Right cardiac atrium (tissue), 5 donors: ENCODE measurements at regions of chr6 and their contacts with region 1.

Region 1: DNA sequence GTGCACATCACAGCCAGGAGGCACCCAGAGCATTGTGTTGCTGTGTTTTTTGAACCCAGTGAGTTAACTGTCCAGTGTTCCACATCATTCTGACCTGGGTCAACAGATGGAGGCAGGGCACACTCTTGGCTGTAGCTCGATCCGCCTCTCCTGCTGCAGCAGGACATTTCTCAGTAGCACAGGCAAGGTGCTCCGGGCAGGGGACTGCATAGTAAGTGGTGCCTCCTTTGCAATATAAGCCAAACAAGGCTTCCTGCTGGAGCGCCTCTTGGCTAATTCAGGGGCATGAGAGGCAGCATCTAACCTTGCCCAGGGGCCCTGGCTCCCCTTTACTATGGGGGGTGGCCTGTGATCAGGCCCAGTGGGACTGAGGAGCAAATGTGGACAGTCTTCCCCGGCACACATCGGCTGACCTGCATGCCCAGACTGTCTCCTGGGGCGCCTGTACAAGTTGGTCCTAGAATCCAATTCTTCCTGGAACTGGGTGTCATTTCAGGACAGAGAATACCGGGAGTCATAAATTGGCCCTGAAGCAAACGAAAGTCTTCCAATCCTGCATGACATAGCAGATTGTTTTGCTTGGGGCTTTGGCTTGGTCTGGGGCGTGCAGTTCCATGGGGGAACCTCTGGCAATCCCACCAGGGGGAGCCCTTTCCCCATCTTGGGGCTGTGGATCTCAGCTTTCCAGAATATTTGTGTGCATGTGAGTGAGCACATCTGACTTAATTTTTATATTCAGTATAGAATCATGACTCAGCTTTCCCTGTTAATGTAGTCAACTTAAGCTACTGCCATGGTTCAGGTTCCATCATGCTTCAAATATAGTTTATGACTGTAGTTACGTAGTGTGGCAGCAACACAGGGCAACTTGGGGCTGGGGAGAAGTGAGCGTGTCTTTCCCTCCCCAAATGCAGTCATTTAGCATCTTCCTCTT is 56.0 kb upstream of the DDR1 start:
- DNase-seq: peak; percentile 86 to 96 (median 94)
- ATAC-seq: peak; percentile 92 to 95
- H3K4me3 ChIP-seq: no peak overlapping the region
- H3K27ac ChIP-seq: peak overlapping the region; percentile 72
- H3K4me1 ChIP-seq: no peaks in the 10 kb centered on the region
- H3K27me3 ChIP-seq: no peaks in the 10 kb centered on the region

Region 2: GRCh38 chr6:30793521-30794194 is 34.6 kb before region 1 on chr6:
- intact Hi-C with region 1: no loop called
- DNase-seq: no peak
- ATAC-seq: peak; percentile 59 to 70
- H3K4me3 ChIP-seq: no peak overlapping the region
- H3K27ac ChIP-seq: peak overlapping the region; percentile 16
- H3K4me1 ChIP-seq: no peaks in the 10 kb centered on the region
- H3K27me3 ChIP-seq: no peaks in the 10 kb centered on the region

Region 3: GRCh38 chr6:30877419-30878371 is 49.4 kb after region 1 on chr6:
- intact Hi-C with region 1: loop called (anchors 2 to 5 kb)
- DNase-seq: peak; percentile 90 to 98 (median 94)
- ATAC-seq: peak; percentile 88 to 92
- H3K4me3 ChIP-seq: peak overlapping the region; percentile 46
- H3K27ac ChIP-seq: peak overlapping the region; percentile 91
- H3K4me1 ChIP-seq: peaks cover 5% of the 10 kb centered on the region
- H3K27me3 ChIP-seq: no peaks in the 10 kb centered on the region

Region 4: DNA sequence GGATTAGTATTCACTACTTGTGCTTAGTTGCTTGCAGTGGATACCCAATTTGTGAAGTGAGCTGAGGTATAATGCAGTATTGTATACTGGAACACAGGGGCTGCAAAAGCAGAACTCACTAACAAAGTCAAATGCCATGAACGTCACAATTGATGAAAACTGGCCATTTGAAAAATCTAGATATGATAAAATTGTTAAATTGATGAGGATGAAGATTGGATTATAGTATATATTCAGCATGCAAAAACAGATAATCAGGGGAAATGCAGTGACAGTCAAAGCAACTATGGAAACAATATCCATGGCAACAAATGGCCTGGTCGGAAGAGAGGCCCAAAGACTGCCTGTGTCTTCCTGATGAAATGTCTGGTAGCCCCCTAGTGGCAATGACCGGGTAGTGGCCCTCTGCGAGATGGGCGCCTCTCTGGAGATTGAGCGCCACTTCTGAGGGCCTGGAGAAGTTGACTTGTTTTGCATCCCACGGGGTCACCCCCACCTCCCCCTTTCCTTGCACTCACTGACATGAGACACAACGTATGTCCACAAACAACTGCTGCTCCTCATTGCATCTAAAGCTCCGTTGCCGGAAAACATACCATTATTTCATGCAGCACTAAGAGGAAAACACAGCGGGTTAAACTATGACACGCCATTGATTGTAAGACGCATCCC is 240.5 kb after region 1 on chr6:
- intact Hi-C with region 1: loop called in 2 of 4 experiments (anchors 5 kb)
- DNase-seq: peak; percentile 74 to 91 (median 86)
- ATAC-seq: peak; percentile 87 to 92
- H3K4me3 ChIP-seq: no peak overlapping the region
- H3K27ac ChIP-seq: no peak overlapping the region
- H3K4me1 ChIP-seq: no peaks in the 10 kb centered on the region
- H3K27me3 ChIP-seq: no peaks in the 10 kb centered on the region

Region 5: GRCh38 chr6:31079656-31080261 is 251.5 kb after region 1 on chr6:
- intact Hi-C with region 1: loop called in 3 of 4 experiments (anchors 5 to 10 kb)
- DNase-seq: peak in 2 of 3 donors; percentile 35 to 82
- ATAC-seq: peak; percentile 73
- H3K4me3 ChIP-seq: no peak overlapping the region
- H3K27ac ChIP-seq: no peak overlapping the region
- H3K4me1 ChIP-seq: no peaks in the 10 kb centered on the region
- H3K27me3 ChIP-seq: no peaks in the 10 kb centered on the region